ENCODE measurements at regions of chr5 and their contacts with region 1.

Region 1: DNA sequence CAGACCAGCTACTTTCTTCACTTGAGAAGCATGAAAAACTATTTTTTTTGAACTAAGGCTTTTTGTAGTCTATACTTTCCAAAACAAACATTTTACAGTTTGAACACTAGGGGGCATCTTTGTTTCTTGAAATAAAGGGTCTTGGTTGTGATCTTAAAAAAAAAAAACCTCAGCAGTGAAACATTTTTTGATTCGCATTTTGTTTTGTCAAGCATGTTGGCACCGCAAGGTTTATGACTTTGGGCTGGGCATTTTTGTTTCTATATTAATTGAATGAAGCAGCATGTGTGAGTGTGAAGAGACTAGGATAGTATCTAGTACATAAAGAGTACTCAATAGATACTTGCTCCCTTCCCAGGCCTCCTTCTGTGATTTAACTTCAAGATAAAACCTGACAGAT is 31.6 kb upstream of the ACOT12 start:
- DNase-seq: no peak
- ATAC-seq: peak in 1 of 2 donors; percentile 66
- H3K4me3 ChIP-seq: no peak overlapping the region
- H3K27ac ChIP-seq: no peak overlapping the region
- H3K4me1 ChIP-seq: peaks cover 17% of the 10 kb centered on the region
- H3K27me3 ChIP-seq: no peaks in the 10 kb centered on the region
- CTCF ChIP-seq: peak; percentile 66

Region 2: DNA sequence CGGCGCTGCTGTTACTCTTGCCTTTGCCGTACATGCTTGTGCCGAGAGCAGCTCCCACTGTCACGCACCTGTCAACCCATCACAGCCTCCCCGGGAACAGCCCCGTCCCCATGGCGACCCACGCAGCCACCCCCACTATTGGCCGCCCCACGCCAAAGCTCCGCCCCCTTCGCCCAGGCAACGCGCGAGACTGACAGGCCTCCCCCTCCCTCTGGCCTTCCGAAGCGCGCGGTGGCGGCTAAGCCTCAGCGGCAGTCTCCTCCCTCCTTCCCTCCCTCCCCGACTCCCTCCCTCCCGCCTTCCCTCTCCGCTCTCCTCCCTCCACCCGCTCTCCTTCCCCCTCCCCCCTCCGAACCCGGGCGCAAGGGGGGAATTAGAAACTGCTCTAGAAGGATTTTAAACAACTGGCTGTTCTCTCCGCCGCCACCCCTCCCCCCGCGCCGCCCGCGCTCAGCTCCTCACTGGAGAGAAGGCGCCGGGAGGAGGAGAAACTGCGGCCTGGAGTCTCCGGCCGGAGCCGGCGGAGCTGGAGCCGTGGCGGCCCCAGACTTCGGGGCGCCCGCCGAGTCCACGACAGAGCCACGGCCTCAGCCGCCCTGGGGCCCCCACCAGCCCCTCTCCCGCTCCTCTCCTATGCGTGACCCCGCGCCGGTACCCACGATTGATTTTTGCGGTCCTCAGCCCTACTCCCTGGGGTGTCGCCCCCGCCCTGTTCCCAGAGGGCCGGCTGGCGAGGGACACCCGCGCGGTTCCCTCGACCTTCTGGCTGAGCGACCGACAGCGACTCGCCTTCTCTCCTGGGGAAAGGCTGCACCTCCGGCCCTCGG is 325.7 kb after region 1 on chr5 and contains the start of gene SSBP2:
- intact Hi-C with region 1: loop called (anchors 10 kb)
- DNase-seq: peak; percentile 98
- ATAC-seq: peak; percentile 96 to 97
- H3K4me3 ChIP-seq: peak within 1 kb of the TSS; percentile 70
- H3K27ac ChIP-seq: peak within 1 kb of the TSS; percentile 97
- H3K4me1 ChIP-seq: peaks cover 41% of the 10 kb centered on the region
- H3K27me3 ChIP-seq: no peaks in the 10 kb centered on the region
- CTCF ChIP-seq: no peak
- total RNA-seq, gene SSBP2: 41.1 TPM

Measured in lower lobe of right lung (tissue), 2 donors.